Calu3 (cell line): ENCODE measurements at regions of chr1 and their contacts with region 1.

Region 1: DNA sequence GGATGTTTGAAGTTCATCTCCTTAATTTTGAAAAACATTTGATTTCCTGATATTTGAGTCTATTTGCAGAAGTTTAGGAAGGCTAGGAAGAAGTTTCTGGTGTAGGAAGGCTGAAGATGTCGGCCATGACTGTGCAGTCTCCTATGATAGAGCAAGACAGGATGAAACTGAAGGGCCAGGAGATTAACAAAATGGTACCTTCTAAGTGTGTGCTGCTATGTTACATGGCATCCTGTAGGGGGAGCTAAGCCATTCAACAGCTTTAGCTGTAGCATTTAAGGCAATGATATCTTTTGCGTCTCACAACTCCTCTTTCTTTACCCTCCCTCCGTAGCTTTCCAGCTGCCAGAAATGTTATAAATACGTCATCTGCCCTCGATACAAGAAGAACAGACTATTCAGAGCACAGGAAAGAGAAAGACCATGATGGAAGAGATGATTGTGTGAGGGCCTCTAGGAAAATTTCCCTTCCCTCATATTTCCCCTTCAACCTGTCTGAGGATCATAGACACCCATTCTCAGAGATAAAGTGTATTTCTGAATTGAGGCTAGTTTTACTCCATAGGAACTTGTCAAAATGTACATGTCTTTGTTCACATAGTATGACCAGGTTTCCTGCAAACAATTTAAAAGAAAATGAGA is 61.1 kb downstream of the XCL1 start:
- DNase-seq: peak; percentile 18
- H3K4me3 Mint-ChIP-seq: peak overlapping the region; percentile 4
- H3K27ac Mint-ChIP-seq: peak overlapping the region; percentile 85
- H3K4me1 Mint-ChIP-seq: peaks cover 30% of the 10 kb centered on the region
- H3K27me3 Mint-ChIP-seq: no peaks in the 10 kb centered on the region
- CTCF ChIP-seq: peak; percentile 49

Region 2: GRCh38 chr1:168689726-168690602 is 52.5 kb after region 1 on chr1:
- CTCF ChIA-PET with region 1: interaction called, 3 read pairs
- intact Hi-C with region 1: loop called (anchors 1 kb)
- DNase-seq: peak; percentile 69
- H3K4me3 Mint-ChIP-seq: peak overlapping the region; percentile 67
- H3K27ac Mint-ChIP-seq: peak overlapping the region; percentile 99
- H3K4me1 Mint-ChIP-seq: peaks cover 88% of the 10 kb centered on the region
- H3K27me3 Mint-ChIP-seq: no peaks in the 10 kb centered on the region
- CTCF ChIP-seq: no peak

Region 3: GRCh38 chr1:168845140-168845539 is 207.7 kb after region 1 on chr1:
- CTCF ChIA-PET with region 1: no interaction called
- intact Hi-C with region 1: loop called (anchors 5 kb)
- DNase-seq: no peak
- H3K4me3 Mint-ChIP-seq: no peak overlapping the region
- H3K27ac Mint-ChIP-seq: peak overlapping the region; percentile 12
- H3K4me1 Mint-ChIP-seq: peaks cover 50% of the 10 kb centered on the region
- H3K27me3 Mint-ChIP-seq: no peaks in the 10 kb centered on the region
- CTCF ChIP-seq: no peak

Region 4: DNA sequence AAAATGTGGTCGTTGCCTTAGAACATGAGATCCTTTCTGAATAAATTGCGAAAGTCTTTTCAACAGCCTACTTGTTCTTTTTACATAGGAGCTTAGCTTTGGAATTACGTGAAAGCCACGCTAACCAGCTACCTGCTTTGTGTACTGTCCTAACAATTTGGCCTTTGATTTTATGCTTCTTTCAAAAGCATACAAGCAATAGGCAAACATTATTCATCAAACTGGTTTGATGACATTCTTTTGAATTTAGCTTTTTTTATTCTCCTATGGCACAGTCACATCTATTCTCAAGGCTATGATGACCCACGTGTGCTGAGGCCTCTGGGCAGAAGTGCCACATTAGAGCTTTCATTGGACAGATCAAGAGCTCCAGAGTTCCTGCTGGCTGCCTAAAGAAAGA is 269.6 kb after region 1 on chr1:
- CTCF ChIA-PET with region 1: interaction called, 10 read pairs
- intact Hi-C with region 1: loop called (anchors 1 kb)
- DNase-seq: peak; percentile 61
- H3K4me3 Mint-ChIP-seq: peak overlapping the region; percentile 36
- H3K27ac Mint-ChIP-seq: peak overlapping the region; percentile 98
- H3K4me1 Mint-ChIP-seq: peaks cover 53% of the 10 kb centered on the region
- H3K27me3 Mint-ChIP-seq: no peaks in the 10 kb centered on the region
- CTCF ChIP-seq: no peak

Region 5: DNA sequence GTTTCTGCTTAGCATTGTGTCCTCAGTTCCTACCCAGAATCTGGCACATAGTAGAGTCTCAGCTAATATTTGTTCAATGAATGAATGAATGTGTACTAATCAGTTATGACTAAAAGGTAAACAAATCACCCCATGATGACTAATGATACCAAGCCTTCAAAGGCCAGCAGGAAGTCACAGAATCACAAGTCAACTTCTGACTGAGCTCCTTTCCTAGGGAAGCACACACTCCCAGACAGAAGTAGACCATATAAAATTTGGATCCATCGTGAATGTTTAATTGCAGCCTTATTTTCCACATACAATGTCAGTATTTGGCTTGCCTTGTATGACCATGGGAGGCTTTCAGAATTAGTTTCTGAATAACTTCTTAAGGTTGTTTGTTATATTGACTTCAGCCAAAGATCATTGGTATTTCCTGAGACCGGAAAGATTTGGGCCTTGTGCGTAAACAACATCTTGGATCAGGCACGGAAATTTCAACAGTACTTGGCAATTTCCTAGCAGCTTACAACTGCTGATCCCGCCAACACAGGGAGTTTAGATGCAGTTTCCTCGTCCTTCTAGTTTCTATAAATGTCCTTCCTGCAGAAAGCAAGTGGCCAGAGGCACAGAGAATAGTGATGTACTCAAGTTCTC is 283.1 kb after region 1 on chr1:
- CTCF ChIA-PET with region 1: interaction called, 20 read pairs
- intact Hi-C with region 1: loop called (anchors 2 kb)
- DNase-seq: peak; percentile 64
- H3K4me3 Mint-ChIP-seq: peak overlapping the region; percentile 42
- H3K27ac Mint-ChIP-seq: peak overlapping the region; percentile 94
- H3K4me1 Mint-ChIP-seq: peaks cover 70% of the 10 kb centered on the region
- H3K27me3 Mint-ChIP-seq: no peaks in the 10 kb centered on the region
- CTCF ChIP-seq: no peak